MCF 10A (cell line): ENCODE measurements at regions of chr12 and their contacts with region 1.

Region 1: GRCh38 chr12:78120866-78121560 is 290.3 kb downstream of the NAV3 start:
- DNase-seq: peak; percentile 51
- H3K4me3 Mint-ChIP-seq: no peak overlapping the region
- H3K27ac Mint-ChIP-seq: no peak overlapping the region
- H3K4me1 Mint-ChIP-seq: no peaks in the 10 kb centered on the region
- H3K27me3 Mint-ChIP-seq: no peaks in the 10 kb centered on the region
- CTCF ChIP-seq: peak; percentile 47

Region 2: GRCh38 chr12:77724367-77724957 is 396.6 kb before region 1 on chr12:
- CTCF ChIA-PET with region 1: no interaction called
- POLR2A ChIA-PET with region 1: no interaction called
- intact Hi-C with region 1: loop called (anchors 1 kb)
- DNase-seq: peak; percentile 64
- H3K4me3 Mint-ChIP-seq: no peak overlapping the region
- H3K27ac Mint-ChIP-seq: no peak overlapping the region
- H3K4me1 Mint-ChIP-seq: no peaks in the 10 kb centered on the region
- H3K27me3 Mint-ChIP-seq: no peaks in the 10 kb centered on the region
- CTCF ChIP-seq: peak; percentile 78

Region 3: GRCh38 chr12:77995436-77996167 is 125.4 kb before region 1 on chr12:
- CTCF ChIA-PET with region 1: interaction called, 16 read pairs
- POLR2A ChIA-PET with region 1: interaction called, 3 read pairs
- intact Hi-C with region 1: loop called (anchors 1 kb)
- DNase-seq: peak; percentile 59
- H3K4me3 Mint-ChIP-seq: no peak overlapping the region
- H3K27ac Mint-ChIP-seq: no peak overlapping the region
- H3K4me1 Mint-ChIP-seq: no peaks in the 10 kb centered on the region
- H3K27me3 Mint-ChIP-seq: no peaks in the 10 kb centered on the region
- CTCF ChIP-seq: no peak

Region 4: GRCh38 chr12:78167510-78167909 is 46.5 kb after region 1 on chr12:
- CTCF ChIA-PET with region 1: no interaction called
- POLR2A ChIA-PET with region 1: no interaction called
- intact Hi-C with region 1: no loop called
- DNase-seq: peak; percentile 24
- H3K4me3 Mint-ChIP-seq: no peak overlapping the region
- H3K27ac Mint-ChIP-seq: no peak overlapping the region
- H3K4me1 Mint-ChIP-seq: peaks cover 5% of the 10 kb centered on the region
- H3K27me3 Mint-ChIP-seq: no peaks in the 10 kb centered on the region
- CTCF ChIP-seq: no peak